ENCODE measurements at regions of chr10 and their contacts with region 1.

Region 1: GRCh38 chr10:104353325-104354048 is at the start of gene CFAP58:
- DNase-seq: peak; percentile 98
- total RNA-seq, gene CFAP58: 2.7 TPM

Region 2: DNA sequence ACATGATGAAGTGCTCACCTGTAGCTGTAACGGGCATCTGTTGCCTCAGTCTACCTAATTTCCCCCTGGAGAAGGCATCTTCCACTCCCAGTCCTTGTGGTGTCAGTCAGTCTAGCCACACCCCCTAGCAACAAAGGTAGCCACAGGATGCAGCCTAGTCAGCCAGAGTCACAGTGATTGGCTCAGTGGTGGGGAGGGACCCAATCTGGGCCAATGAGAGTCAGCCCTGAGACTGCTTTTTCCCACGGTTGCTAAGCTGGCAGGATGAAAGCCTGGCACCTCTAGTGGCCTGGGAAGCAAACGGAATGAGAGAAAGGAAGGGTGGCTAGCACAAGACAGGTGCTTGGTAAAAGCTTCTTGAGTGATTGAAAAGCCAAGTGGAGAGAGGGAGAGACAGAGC is 616.7 kb before region 1 on chr10:
- intact Hi-C with region 1: no loop called
- DNase-seq: no peak

Region 3: DNA sequence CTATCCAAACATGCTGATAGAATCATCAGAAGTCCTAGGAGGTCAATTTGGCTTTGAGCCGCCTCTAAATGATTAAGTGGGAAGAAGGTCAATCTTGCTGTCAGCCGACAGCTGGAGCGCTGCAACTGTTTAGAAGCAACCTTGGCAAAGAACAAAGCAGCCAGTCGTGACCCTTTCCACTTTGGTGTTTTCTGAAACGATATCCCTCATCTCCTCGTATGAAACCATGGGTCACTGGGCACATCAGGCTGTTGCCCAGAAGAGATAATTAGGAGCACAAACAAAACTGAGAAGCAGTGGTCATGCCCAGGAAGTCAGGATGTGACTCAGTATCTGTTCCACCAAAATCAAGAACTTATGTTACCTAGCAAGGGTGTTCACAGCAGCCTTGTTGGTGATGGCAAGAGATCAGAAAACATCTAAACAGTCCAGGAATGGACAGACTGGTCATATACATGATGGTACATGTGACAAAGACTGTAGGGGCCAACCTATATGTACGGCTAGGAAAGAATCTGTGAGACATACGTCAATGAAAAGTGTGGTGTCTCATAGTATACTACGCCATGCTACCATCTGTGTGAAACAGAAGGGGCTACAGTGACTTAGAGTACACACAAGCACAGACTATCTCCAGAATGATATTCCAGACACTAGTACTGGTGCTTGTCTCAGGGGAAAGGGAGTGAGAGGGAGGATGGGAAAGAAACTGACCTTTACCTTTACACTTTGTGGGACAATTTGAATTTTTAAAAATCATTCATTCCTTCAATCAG is 457.9 kb before region 1 on chr10:
- intact Hi-C with region 1: loop called (anchors 10 kb)
- DNase-seq: no peak

Region 4: DNA sequence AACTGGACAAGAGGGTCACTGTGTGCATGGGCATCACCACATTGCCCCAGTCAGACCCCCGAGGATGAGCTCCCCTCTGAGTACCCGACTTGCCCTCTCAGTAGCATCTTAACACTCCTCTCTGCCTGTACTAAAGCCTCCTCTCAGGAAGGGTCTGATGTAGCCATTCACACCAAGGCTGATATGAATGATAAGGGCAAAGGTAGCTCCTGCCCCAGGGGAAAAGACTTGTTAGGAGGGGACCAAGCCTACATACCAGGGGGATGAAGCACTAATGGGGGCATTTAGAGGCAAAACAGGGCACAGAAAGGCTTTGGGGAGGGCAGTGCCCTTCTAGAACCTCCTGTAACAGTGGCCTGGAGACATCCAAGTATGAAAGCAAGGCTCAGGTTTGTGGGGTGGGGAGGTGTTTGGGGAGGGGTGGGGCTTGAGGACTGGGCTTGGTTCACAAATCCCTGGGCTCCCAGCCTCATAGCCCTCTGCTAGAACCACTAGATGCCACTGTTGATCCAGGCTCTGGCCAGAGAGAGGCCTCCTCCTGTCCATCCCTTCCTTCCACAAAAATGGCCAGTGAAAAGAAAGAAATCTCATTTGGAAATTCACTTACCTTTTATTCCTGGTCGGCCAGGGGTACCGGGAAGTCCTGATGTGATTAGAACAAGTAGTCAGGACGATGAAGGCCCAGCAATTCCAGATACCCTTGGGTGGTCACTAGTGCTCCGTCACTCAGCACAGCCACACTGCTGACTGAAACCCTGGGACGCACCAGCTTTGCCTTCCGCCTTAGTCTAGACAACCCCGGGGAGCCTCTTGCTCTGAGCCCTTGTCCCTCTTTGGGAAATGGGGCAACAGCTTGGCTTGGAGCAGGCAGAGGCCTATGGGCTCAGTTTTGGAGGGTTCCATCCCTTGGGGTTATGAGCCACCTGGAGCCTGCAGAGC is 308.1 kb before region 1 on chr10:
- intact Hi-C with region 1: loop called (anchors 10 kb)
- DNase-seq: no peak

Region 5: DNA sequence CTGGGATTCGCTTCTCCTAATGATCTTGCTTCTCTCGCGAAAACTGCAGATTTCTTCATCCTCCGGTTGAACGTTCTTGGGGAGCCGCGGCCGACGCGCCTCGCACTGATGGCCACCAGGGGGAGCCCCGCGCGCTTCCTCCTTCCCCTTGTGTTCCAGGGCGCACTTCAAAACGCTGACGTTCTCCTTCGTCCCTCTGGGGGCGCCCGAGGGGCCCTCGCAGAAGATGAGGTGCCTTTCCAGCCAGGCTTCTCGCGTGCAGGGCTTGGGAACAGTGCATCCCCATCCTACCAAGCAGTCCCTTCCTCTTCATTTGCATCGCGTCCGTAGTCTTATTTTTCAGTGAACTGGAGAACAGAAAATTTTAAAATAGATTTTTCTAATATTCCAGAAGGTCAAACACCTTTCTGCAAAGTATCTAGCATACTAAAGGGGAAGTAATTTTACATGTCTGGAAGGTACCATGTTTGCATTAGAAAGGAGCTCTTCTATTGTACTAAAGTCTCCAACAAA is 62.0 kb before region 1 on chr10:
- intact Hi-C with region 1: loop called (anchors 1 kb)
- DNase-seq: peak; percentile 96

Region 6: DNA sequence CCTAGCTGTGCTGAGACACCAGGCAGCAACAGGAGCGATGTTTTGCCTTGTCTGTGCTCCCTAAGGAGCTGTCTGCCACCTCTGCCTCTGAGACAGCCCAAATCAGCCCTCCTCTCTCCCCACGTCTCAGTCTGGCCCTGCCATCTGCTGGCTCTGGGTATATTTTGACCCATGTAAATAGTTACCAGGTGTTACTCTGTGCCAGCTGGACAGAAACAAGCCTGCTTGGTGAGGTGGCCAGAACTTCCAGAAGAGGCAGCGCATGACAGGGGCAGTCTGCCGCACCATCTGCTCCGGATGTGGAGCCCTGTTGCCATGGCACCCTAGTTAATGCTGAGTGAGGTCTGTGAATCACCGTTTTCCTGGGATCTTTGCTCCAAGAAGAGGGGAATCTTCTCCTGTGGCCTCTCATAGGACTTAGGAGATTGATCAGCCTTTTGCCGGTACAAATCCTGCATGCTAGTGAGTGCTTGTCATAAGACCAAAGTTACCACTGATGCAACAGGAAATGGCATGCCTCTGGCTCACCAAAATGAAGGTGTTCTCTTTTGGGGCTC is 52.7 kb before region 1 on chr10:
- intact Hi-C with region 1: loop called (anchors 2 kb)
- DNase-seq: peak; percentile 87

Region 7: GRCh38 chr10:104638861-104639589 is 285.5 kb after region 1 on chr10:
- intact Hi-C with region 1: no loop called
- DNase-seq: no peak

Measured in cardiac septum (tissue), 1 donor.